Activated CD4-positive, alpha-beta T cell treated with anti-CD3 and anti-CD28 coated beads, Interleukin-2, amount 10 ng/mL, durations not matched to agents 24 days and 14 days (primary cell): ENCODE measurements at regions of chr2 and their contacts with region 1.

Region 1: GRCh38 chr2:145323512-145323911 is 803.6 kb upstream of the ZEB2 start:
- DNase-seq: peak; percentile 62
- H3K4me3 Mint-ChIP-seq: no peak overlapping the region
- H3K27ac Mint-ChIP-seq: peak overlapping the region; percentile 0
- H3K4me1 Mint-ChIP-seq: peaks cover 15% of the 10 kb centered on the region
- H3K27me3 Mint-ChIP-seq: peaks cover 18% of the 10 kb centered on the region

Region 2: GRCh38 chr2:145258903-145259579 is 64.5 kb before region 1 on chr2:
- intact Hi-C with region 1: loop called (anchors 2 kb)
- DNase-seq: peak; percentile 71
- H3K4me3 Mint-ChIP-seq: no peak overlapping the region
- H3K27ac Mint-ChIP-seq: no peak overlapping the region
- H3K4me1 Mint-ChIP-seq: peaks cover 9% of the 10 kb centered on the region
- H3K27me3 Mint-ChIP-seq: peaks cover 29% of the 10 kb centered on the region

Region 3: GRCh38 chr2:145752091-145752806 is 428.7 kb after region 1 on chr2:
- intact Hi-C with region 1: loop called (anchors 5 kb)
- DNase-seq: no peak
- H3K4me3 Mint-ChIP-seq: no peak overlapping the region
- H3K27ac Mint-ChIP-seq: no peak overlapping the region
- H3K4me1 Mint-ChIP-seq: peaks cover 10% of the 10 kb centered on the region
- H3K27me3 Mint-ChIP-seq: no peaks in the 10 kb centered on the region